Right ventricle myocardium inferior (tissue), 1 donor: ENCODE measurements at regions of chr1 and their contacts with region 1.

Region 1: GRCh38 chr1:41876576-41877445 is 41.9 kb downstream of the HIVEP3 start:
- DNase-seq: no peak
- ATAC-seq: no peak

Region 2: DNA sequence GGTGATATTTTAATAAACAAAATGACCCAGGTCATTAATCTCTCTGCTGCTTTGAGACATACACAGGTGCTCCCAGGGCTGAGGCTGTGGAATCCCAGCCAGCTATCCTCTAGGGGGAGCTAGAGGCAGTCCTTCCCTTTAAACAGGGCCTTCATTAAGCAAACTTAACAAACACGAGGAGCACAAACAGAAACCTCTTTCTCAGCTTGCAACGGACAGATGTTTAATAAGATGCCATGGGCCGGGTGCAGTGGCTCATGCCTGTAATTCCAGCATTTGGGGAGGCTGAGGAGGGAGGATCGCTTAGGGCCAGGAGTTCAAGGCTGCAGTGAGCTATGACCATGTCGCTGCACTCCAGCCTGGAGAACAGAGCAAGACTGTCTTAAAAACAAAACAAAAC is 64.8 kb before region 1 on chr1:
- intact Hi-C with region 1: loop called (anchors 5 kb)
- DNase-seq: no peak
- ATAC-seq: no peak

Region 3: GRCh38 chr1:41898191-41898713 is 21.4 kb after region 1 on chr1:
- intact Hi-C with region 1: no loop called
- DNase-seq: no peak
- ATAC-seq: no peak